A549 (cell line): ENCODE measurements at regions of chr9 and their contacts with region 1.

Region 1: DNA sequence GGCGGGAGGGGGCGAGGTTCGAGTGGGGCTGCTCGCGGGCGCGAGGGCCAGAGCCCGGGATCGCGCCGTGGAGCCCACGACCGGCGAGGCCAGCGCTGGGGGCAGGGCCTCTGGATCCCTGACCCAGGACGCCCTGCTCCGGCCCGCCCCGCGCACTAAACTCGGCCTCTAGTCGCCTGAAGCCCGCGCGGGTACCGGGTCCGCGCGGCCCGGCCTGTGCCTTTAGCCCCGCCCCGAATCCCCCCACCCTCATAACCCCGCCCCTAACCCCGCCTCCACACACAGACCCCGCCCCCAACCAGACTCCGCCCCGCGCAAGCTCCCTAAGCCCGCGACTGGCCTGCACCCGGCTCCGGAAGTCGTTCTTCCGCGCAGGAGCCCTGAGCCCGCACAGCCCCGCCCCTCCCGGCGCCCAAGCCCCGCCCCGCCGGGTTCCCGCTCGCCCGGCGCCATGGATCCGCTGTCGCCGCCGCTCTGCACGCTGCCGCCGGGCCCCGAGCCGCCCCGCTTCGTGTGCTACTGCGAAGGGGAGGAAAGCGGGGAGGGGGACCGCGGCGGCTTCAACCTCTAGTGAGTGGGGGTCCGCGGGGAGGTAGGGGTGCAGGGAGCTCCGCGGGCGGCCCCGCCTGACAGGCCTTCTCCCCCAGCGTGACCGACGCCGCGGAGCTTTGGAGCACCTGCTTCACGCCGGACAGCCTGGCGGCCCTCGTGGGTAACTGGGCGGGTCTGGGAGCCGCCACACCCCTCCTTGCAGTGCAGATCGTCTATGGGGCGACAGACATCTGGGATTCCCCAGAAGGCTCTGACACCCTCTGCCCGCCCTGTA is at the start of gene PAXX:
- DNase-seq: peak; percentile 88 to 94
- ATAC-seq: peak; percentile 74 to 82
- H3K4me3 ChIP-seq: peak within 1 kb of the TSS; percentile 89
- H3K27ac ChIP-seq: peak within 1 kb of the TSS; percentile 91 to 97
- H3K4me1 ChIP-seq: peaks cover 45% of the 10 kb centered on the region
- CTCF ChIP-seq: no peak
- EP300 ChIP-seq: no peak
- POLR2A ChIP-seq: peak; percentile 65
- RAD21 ChIP-seq: no peak
- polyA plus RNA-seq, gene PAXX: 12.6 and 15.6 TPM in 2 replicates

Region 2: DNA sequence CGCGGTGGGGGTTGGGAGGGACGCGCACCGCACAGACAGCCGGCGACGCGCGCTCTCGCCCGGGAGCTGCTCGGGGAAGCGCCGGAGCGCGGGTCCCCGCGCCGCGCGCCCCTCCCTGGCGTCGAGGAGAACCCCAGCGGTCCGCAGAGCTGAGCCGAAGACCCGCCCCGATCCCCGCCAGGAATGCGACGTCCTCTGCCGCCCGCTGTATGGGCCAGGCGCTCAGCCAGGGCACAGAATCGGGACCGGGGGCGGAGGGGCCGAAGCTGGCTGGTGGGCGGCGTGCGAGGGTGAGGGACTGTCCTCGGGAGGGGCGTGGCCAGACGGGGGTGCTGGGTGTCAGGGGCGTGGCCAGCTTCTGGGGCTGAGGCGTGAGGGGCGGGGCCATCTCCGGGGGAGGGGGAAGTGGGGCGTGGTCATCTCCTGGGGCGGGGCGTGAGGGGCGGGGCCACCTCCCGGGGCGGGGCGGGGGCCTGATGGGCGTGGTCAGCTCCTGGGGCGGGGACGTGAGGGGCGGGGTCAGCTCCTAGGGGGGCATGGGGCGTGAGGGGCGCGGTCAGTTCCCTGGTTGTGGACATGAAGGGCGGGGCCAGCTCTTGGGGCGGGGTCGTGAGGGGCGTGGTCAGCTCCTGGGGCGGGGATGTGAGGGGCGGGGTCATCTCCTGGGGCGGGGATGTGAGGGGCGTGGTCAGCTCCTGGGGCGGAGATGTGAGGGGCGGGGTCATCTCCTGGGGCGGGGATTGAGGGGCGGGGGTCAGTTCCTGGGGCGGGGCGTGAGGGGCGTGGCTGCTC is 13.9 kb before region 1 on chr9:
- CTCF ChIA-PET with region 1: interaction called, 4 read pairs
- POLR2A ChIA-PET with region 1: interaction called, 20 read pairs
- DNase-seq: peak; percentile 89 to 95
- ATAC-seq: peak; percentile 4 to 56
- H3K4me3 ChIP-seq: peak overlapping the region; percentile 45
- H3K27ac ChIP-seq: peak overlapping the region; percentile 52 to 94
- H3K4me1 ChIP-seq: peaks cover 14% of the 10 kb centered on the region
- CTCF ChIP-seq: no peak
- EP300 ChIP-seq: no peak
- POLR2A ChIP-seq: no peak
- RAD21 ChIP-seq: no peak

Region 3: GRCh38 chr9:137350696-137351584 is 358.7 kb after region 1 on chr9:
- CTCF ChIA-PET with region 1: no interaction called
- POLR2A ChIA-PET with region 1: no interaction called
- DNase-seq: no peak
- ATAC-seq: peak; percentile 63 to 66; a peak in 5 of 6 replicates
- H3K4me3 ChIP-seq: no peak overlapping the region
- H3K27ac ChIP-seq: no peak overlapping the region
- H3K4me1 ChIP-seq: no peaks in the 10 kb centered on the region
- CTCF ChIP-seq: no peak
- EP300 ChIP-seq: no peak
- POLR2A ChIP-seq: no peak
- RAD21 ChIP-seq: no peak